Endothelial cell of umbilical vein (primary cell): ENCODE measurements at regions of chr7 and their contacts with region 1.

Region 1: GRCh38 chr7:93117852-93118530 is at the start of gene SAMD9:
- DNase-seq: peak; percentile 76
- H3K4me3 ChIP-seq: peak within 1 kb of the TSS; percentile 33 to 82 (median 61)
- H3K27ac ChIP-seq: peak within 1 kb of the TSS; percentile 46
- H3K4me1 ChIP-seq: peaks cover 10% of the 10 kb centered on the region
- H3K27me3 ChIP-seq: no peaks in the 10 kb centered on the region
- CTCF ChIP-seq: no peak
- POLR2A ChIP-seq: no peak
- total RNA-seq, gene SAMD9: 5.5 and 6.8 TPM in 2 replicates

Region 2: DNA sequence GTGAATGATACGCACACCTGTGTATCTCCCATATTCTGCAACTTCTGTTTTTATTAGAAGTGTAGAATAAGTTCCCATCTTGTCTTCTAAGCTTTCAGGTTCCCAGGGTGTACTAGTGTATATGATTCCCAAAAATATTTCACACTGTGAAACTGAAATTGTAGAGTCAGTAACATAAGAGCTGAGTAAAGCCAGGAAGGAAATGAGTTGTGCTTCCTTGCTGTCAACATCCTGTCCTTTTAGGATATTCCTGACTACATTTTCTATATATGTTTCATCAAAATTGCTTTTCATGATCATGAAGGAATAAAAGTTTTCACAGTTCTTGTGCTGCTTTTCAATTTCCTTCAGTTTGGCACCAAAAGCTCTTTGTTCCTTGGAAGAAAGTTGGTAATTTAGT is 15.0 kb after region 1 on chr7:
- CTCF ChIA-PET with region 1: interaction called, 4 read pairs
- POLR2A ChIA-PET with region 1: no interaction called
- dilution Hi-C with region 1: no loop called
- intact Hi-C with region 1: loop called (anchors 1 kb)
- DNase-seq: peak; percentile 23
- H3K4me3 ChIP-seq: no peak overlapping the region
- H3K27ac ChIP-seq: peak overlapping the region; percentile 15
- H3K4me1 ChIP-seq: peaks cover 9% of the 10 kb centered on the region
- H3K27me3 ChIP-seq: no peaks in the 10 kb centered on the region
- CTCF ChIP-seq: no peak
- POLR2A ChIP-seq: no peak

Region 3: GRCh38 chr7:93147363-93147762 is 29.4 kb after region 1 on chr7:
- CTCF ChIA-PET with region 1: interaction called, 3 read pairs
- POLR2A ChIA-PET with region 1: no interaction called
- dilution Hi-C with region 1: no loop called
- intact Hi-C with region 1: loop called (anchors 1 kb)
- DNase-seq: peak; percentile 76
- H3K4me3 ChIP-seq: peak overlapping the region; percentile 30 to 89 (median 71)
- H3K27ac ChIP-seq: peak overlapping the region; percentile 50
- H3K4me1 ChIP-seq: peaks cover 20% of the 10 kb centered on the region
- H3K27me3 ChIP-seq: no peaks in the 10 kb centered on the region
- CTCF ChIP-seq: no peak
- POLR2A ChIP-seq: no peak